ENCODE measurements at regions of chr6 and their contacts with region 1.

Region 1: GRCh38 chr6:138773177-138774091 is at the start of gene CCDC28A:
- DNase-seq: peak; percentile 93 to 94 (median 94)
- H3K4me3 ChIP-seq: peak within 1 kb of the TSS; percentile 74 to 95 (median 75)
- H3K4me3 Mint-ChIP-seq: peak within 1 kb of the TSS; percentile 98 to 100
- H3K27ac ChIP-seq: peak within 1 kb of the TSS; percentile 93 to 99
- H3K27ac Mint-ChIP-seq: peak within 1 kb of the TSS; percentile 99 to 100 (median 100)
- H3K4me1 ChIP-seq: peaks cover 20 to 24% of the 10 kb centered on the region in 2 donors
- H3K4me1 Mint-ChIP-seq: peaks cover 19% of the 10 kb centered on the region
- H3K27me3 ChIP-seq: no peaks in the 10 kb centered on the region
- H3K27me3 Mint-ChIP-seq: peaks cover 0 to 2% (median 0%) of the 10 kb centered on the region in 3 donors
- CTCF ChIP-seq: no peak
- polyA plus RNA-seq, gene CCDC28A: 16.6 to 53.3 (median 42.6) TPM

Region 2: DNA sequence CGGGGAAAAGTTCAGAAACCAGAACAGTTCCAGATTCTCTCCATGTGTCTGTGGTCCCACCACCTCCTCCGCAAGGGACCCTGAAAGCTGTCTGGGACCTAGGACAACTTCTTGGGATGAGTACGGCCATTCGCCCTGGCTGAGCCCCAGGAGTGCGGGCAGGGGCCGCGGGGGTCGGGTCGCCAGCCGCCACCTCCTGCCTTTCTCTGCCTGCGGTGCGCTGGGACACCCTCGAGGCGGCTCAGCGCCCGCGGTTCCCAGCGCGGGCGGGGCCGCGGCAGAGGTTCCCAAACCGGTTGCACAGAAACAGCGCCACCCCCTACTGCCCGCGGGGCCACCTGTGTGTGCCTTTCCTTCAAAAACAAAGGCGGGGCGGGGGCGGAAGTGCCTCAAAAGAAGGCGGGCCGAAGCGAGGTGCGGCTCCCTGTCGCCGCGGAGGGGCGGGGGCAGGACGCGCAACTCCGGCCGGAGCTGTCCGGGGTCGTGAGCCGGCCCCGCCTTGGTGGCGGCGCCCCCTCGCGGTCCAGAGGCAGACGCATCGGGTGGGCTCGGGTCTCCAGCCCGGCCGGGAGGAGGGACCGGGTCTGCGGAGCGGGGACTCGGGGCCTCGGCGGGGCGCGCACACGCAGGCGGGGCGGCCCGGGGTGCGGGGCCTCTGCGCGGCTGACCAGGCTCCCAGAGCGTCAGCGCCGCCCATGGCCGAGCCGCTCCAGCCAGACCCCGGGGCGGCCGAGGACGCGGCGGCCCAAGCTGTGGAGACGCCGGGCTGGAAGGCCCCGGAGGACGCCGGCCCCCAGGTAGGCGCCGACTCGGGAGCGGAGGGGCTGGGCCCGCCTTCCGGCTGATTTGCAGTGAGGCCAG is 369.4 kb before region 1 on chr6 and contains the start of gene HEBP2:
- intact Hi-C with region 1: loop called in 1 of 2 experiments (anchors 10 kb)
- DNase-seq: peak; percentile 69 to 73 (median 73)
- H3K4me3 ChIP-seq: peak within 1 kb of the TSS; percentile 50 to 95 (median 87)
- H3K4me3 Mint-ChIP-seq: peak within 1 kb of the TSS; percentile 91 to 94
- H3K27ac ChIP-seq: peak within 1 kb of the TSS; percentile 76 to 92
- H3K27ac Mint-ChIP-seq: peak within 1 kb of the TSS; percentile 83 to 94 (median 92)
- H3K4me1 ChIP-seq: peaks cover 22 to 53% of the 10 kb centered on the region in 2 donors
- H3K4me1 Mint-ChIP-seq: peaks cover 42% of the 10 kb centered on the region
- H3K27me3 ChIP-seq: no peaks in the 10 kb centered on the region
- H3K27me3 Mint-ChIP-seq: peaks cover 0 to 2% (median 0%) of the 10 kb centered on the region in 3 donors
- CTCF ChIP-seq: peak; percentile 45
- polyA plus RNA-seq, gene HEBP2: 17.0 to 97.5 (median 96.8) TPM

Region 3: GRCh38 chr6:138692058-138692977 is 81.1 kb before region 1 on chr6:
- intact Hi-C with region 1: loop called in 1 of 2 experiments (anchors 5 kb)
- DNase-seq: peak; percentile 28 to 53 (median 43)
- H3K4me3 ChIP-seq: peak overlapping the region; percentile 50 to 76 (median 76)
- H3K4me3 Mint-ChIP-seq: peak overlapping the region; percentile 88 to 89
- H3K27ac ChIP-seq: peak overlapping the region in 1 of 2 donors; percentile 23
- H3K27ac Mint-ChIP-seq: peak overlapping the region in 1 of 7 donors; percentile 46
- H3K4me1 ChIP-seq: peaks cover 13 to 17% of the 10 kb centered on the region in 2 donors
- H3K4me1 Mint-ChIP-seq: peaks cover 12% of the 10 kb centered on the region
- H3K27me3 ChIP-seq: peaks cover 3 to 23% of the 10 kb centered on the region in 2 donors
- H3K27me3 Mint-ChIP-seq: peaks cover 26 to 34% (median 31%) of the 10 kb centered on the region in 3 donors
- CTCF ChIP-seq: peak; percentile 100